HepG2 (cell line): ENCODE measurements at regions of chr3 and their contacts with region 1.

Region 1: DNA sequence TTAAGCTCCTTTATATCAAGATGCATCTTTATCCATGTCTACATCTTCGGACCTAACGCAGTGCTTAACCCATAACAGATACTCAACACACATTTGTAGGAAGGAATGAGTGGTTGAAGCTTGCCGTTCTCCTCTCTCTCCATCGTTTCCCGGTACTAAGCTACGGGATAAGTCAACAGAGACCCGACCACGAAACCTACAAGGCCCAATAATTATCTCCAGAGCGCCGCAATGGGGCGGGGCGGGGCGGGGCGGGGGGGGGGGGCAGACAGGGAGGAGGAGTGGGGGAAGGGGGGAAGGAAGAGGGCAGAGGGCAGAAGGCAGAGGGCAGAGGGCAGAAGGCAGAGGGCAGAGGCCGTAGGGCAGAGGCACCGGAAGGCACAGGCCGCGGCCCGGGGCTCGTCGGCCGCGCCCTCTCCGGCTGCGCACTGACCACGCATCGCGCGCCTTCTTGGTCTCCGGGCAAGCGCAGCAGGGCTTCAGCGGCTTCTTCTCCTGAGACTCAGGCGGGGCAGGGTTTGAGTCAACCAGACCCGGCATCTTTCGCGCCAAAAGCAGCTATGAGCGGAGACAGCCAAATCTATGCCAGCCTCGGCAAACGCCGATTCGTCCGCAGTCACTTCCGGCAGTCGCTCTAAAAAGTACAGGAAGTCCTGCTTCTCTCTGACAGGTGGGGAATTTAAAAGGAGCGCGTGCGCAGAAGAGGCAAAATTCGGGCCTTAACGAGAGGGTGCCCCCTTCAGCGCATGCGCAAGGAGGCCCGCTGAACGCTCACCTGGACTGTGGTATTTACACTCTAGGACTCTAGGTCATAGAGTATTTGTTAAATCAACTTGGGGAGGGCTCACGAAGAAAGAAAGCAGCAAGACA is at the start of gene COX17:
- DNase-seq: peak; percentile 97
- ATAC-seq: peak; percentile 95
- H3K4me3 ChIP-seq: peak within 1 kb of the TSS; percentile 69 to 96 (median 77)
- H3K27ac ChIP-seq: peak within 1 kb of the TSS; percentile 84
- H3K4me1 ChIP-seq: peaks cover 16% of the 10 kb centered on the region
- H3K27me3 ChIP-seq: no peaks in the 10 kb centered on the region; a peak in 1 of 5 replicates
- CTCF ChIP-seq: no peak
- EP300 ChIP-seq: no peak
- POLR2A ChIP-seq: peak; percentile 61
- RAD21 ChIP-seq: no peak; the same call in 1 of the 2 replicates
- total RNA-seq, gene COX17: 51.0 and 66.2 TPM in 2 replicates

Region 2: GRCh38 chr3:118884748-118885206 is 792.2 kb before region 1 on chr3:
- CTCF ChIA-PET with region 1: no interaction called
- POLR2A ChIA-PET with region 1: no interaction called
- in situ Hi-C with region 1: loop called (anchors 25 kb)
- intact Hi-C with region 1: loop called (anchors 1 kb)
- DNase-seq: peak; percentile 18
- ATAC-seq: peak; percentile 96
- H3K4me3 ChIP-seq: no peak overlapping the region
- H3K27ac ChIP-seq: no peak overlapping the region
- H3K4me1 ChIP-seq: no peaks in the 10 kb centered on the region
- H3K27me3 ChIP-seq: peaks cover 0 to 4% of the 10 kb centered on the region in 2 experiments; a peak in 1 of 5 replicates
- CTCF ChIP-seq: peak; percentile 72
- EP300 ChIP-seq: no peak
- POLR2A ChIP-seq: no peak
- RAD21 ChIP-seq: no peak

Region 3: DNA sequence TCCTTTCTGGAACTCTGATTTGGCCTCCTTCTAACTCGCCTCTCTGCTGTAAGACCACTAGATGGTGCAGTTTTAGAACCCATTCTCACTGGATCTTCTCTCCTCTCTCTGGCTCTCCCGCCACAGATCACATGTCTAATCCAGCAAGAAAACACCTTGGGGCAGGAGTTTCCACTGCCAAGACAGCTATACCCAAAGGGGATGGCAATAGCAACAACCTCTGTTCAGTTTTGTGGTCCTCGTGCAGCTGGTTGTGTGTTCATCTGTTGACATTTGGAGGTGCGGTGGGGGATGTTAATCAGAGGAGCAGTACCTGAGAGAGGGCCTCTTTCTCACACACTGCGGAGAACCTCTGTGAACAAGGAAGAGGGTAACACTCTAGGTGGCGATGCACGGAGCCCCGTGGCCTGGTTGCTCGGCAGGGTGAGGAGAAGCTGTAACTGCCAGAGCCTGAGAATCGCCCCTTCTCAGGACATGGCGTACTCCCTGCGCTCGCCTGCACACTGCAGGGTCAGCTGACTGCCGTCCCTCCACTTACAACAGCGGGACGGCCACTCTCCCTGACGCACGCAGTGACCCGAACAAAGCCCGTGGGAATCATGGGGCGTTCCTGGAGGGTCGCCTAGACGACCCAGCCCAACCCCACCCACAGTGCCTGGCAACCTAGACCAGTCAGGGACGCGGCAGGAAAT is 531.4 kb before region 1 on chr3 and contains the start of gene TEX55:
- CTCF ChIA-PET with region 1: interaction called, 13 read pairs
- POLR2A ChIA-PET with region 1: no interaction called
- in situ Hi-C with region 1: loop called (anchors 25 kb)
- intact Hi-C with region 1: no loop called
- DNase-seq: peak; percentile 30
- ATAC-seq: peak; percentile 97
- H3K4me3 ChIP-seq: no peak within 1 kb of the TSS
- H3K27ac ChIP-seq: no peak within 1 kb of the TSS
- H3K4me1 ChIP-seq: no peaks in the 10 kb centered on the region
- H3K27me3 ChIP-seq: no peaks in the 10 kb centered on the region
- CTCF ChIP-seq: peak; percentile 79
- EP300 ChIP-seq: no peak
- POLR2A ChIP-seq: no peak
- RAD21 ChIP-seq: peak; percentile 44; the same call in 1 of the 2 replicates
- total RNA-seq, gene TEX55: not detected in 2 replicates

Region 4: DNA sequence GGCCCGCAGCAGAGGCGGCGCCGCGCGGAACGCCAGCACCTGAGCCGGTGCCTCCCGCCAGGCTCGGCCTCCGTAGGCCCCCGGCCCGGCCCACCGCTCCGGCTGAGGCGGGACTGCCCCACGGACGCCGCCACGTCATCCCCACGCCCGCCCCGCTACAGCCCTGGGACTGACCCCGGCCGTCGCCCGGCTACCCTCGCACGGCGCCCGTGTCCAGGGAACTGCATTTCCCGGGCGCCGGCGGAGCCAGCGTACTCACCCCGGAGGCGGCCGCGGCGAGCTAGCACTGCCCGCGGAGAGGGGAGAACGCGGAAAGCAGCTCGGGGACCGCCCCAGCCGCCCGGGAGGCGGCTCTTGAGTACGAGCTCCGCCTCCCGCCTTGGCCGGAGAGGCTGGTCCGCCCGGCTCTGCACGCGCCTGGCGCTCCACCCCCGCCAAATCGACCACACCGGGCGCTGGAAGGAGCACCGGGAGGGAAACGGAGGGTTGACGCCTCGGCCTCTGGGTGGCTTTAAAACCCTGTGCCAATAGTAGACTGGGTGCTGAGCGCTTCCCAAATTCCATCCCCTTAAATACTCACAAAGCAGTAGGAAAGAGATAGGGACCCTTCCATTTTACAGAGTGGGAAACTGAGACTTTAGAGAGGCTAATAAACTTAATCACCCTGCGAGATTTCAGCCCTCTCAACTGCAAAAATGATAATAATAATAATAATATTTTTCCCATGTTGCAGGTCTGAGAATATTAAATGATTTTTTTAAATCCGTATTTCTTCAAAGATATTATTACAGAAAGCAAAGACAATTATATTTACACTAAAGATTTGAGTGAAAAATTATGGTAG is 436.2 kb before region 1 on chr3 and contains the start of gene B4GALT4:
- CTCF ChIA-PET with region 1: no interaction called
- POLR2A ChIA-PET with region 1: interaction called, 3 read pairs
- in situ Hi-C with region 1: no loop called
- intact Hi-C with region 1: loop called (anchors 1 kb)
- DNase-seq: peak; percentile 73
- ATAC-seq: peak; percentile 95
- H3K4me3 ChIP-seq: peak within 1 kb of the TSS; percentile 72 to 85 (median 82)
- H3K27ac ChIP-seq: peak within 1 kb of the TSS; percentile 98
- H3K4me1 ChIP-seq: peaks cover 20% of the 10 kb centered on the region
- H3K27me3 ChIP-seq: no peaks in the 10 kb centered on the region
- CTCF ChIP-seq: 0 out of 2 replicates have a peak, but pooled peaks have one; percentile 16
- EP300 ChIP-seq: no peak
- POLR2A ChIP-seq: peak; percentile 80 to 85
- RAD21 ChIP-seq: peak; percentile 46; the same call in 1 of the 2 replicates
- total RNA-seq, gene B4GALT4: 23.8 and 29.0 TPM in 2 replicates

Region 5: GRCh38 chr3:119401503-119402372 is 275.3 kb before region 1 on chr3:
- CTCF ChIA-PET with region 1: no interaction called
- POLR2A ChIA-PET with region 1: no interaction called
- in situ Hi-C with region 1: loop called (anchors 25 kb)
- intact Hi-C with region 1: no loop called
- DNase-seq: no peak
- ATAC-seq: no peak
- H3K4me3 ChIP-seq: no peak overlapping the region
- H3K27ac ChIP-seq: no peak overlapping the region
- H3K4me1 ChIP-seq: no peaks in the 10 kb centered on the region
- H3K27me3 ChIP-seq: no peaks in the 10 kb centered on the region
- CTCF ChIP-seq: no peak
- EP300 ChIP-seq: no peak
- POLR2A ChIP-seq: no peak
- RAD21 ChIP-seq: no peak

Region 6: GRCh38 chr3:119469381-119470189 is 207.4 kb before region 1 on chr3:
- CTCF ChIA-PET with region 1: no interaction called
- POLR2A ChIA-PET with region 1: no interaction called
- in situ Hi-C with region 1: no loop called
- intact Hi-C with region 1: loop called (anchors 2 kb)
- DNase-seq: no peak
- ATAC-seq: peak; percentile 80
- H3K4me3 ChIP-seq: peak overlapping the region; percentile 79 to 93 (median 92)
- H3K27ac ChIP-seq: peak overlapping the region; percentile 75
- H3K4me1 ChIP-seq: peaks cover 28% of the 10 kb centered on the region
- H3K27me3 ChIP-seq: no peaks in the 10 kb centered on the region; a peak in 1 of 5 replicates
- CTCF ChIP-seq: no peak
- EP300 ChIP-seq: no peak
- POLR2A ChIP-seq: no peak
- RAD21 ChIP-seq: no peak

Region 7: GRCh38 chr3:119600732-119601131 is 76.3 kb before region 1 on chr3:
- CTCF ChIA-PET with region 1: no interaction called
- POLR2A ChIA-PET with region 1: no interaction called
- in situ Hi-C with region 1: no loop called
- intact Hi-C with region 1: loop called (anchors 1 kb)
- DNase-seq: no peak
- ATAC-seq: peak; percentile 93
- H3K4me3 ChIP-seq: no peak overlapping the region; a peak in 1 of 6 replicates
- H3K27ac ChIP-seq: no peak overlapping the region
- H3K4me1 ChIP-seq: peaks cover 20% of the 10 kb centered on the region; the same call in 1 of the 2 replicates
- H3K27me3 ChIP-seq: no peaks in the 10 kb centered on the region; a peak in 1 of 5 replicates
- CTCF ChIP-seq: peak; percentile 72
- EP300 ChIP-seq: no peak
- POLR2A ChIP-seq: no peak
- RAD21 ChIP-seq: peak; percentile 46; the same call in 1 of the 2 replicates

Region 8: DNA sequence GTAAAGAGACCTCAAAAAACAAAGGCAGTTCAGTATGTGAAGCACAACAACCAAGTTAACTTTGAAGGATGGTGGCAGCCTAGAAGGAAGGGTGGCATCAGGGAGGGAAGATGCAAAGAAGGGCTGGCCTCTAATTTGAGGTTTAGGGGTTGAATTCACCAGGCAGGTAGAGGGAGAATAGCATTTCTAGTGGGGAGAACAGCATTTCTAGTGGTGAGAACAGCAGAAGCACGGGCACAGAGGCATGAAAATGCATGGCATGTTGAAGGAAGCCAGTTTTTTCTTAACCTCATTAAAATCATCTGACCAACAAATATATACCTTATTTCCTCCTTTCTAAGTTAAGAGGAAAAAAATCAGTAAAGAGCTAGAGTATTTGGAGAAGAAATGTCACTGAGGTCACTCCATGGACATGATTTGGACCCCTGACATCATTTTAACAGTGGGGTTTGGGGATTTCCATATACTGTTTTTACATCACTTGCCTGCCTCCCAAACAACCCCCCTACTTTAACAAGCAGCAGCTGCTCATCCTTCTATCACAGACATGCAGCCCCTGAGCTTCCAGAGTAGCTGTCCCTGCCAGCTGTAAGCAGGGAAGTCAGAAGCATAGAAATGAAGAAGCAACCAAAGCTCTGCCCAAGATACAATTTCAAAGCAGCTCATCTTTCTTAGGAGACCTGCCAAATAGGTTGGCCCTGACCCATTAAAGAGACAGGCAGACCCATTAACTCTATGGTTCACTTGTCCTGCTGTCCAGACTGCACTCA is 14.2 kb before region 1 on chr3:
- CTCF ChIA-PET with region 1: no interaction called
- POLR2A ChIA-PET with region 1: no interaction called
- in situ Hi-C with region 1: no loop called
- intact Hi-C with region 1: no loop called
- DNase-seq: no peak
- ATAC-seq: no peak
- H3K4me3 ChIP-seq: no peak overlapping the region
- H3K27ac ChIP-seq: no peak overlapping the region
- H3K4me1 ChIP-seq: no peaks in the 10 kb centered on the region
- H3K27me3 ChIP-seq: no peaks in the 10 kb centered on the region
- CTCF ChIP-seq: no peak
- EP300 ChIP-seq: no peak
- POLR2A ChIP-seq: no peak
- RAD21 ChIP-seq: no peak